Breast epithelium (tissue), 4 donors: ENCODE measurements at regions of chr13 and their contacts with region 1.

Region 1: DNA sequence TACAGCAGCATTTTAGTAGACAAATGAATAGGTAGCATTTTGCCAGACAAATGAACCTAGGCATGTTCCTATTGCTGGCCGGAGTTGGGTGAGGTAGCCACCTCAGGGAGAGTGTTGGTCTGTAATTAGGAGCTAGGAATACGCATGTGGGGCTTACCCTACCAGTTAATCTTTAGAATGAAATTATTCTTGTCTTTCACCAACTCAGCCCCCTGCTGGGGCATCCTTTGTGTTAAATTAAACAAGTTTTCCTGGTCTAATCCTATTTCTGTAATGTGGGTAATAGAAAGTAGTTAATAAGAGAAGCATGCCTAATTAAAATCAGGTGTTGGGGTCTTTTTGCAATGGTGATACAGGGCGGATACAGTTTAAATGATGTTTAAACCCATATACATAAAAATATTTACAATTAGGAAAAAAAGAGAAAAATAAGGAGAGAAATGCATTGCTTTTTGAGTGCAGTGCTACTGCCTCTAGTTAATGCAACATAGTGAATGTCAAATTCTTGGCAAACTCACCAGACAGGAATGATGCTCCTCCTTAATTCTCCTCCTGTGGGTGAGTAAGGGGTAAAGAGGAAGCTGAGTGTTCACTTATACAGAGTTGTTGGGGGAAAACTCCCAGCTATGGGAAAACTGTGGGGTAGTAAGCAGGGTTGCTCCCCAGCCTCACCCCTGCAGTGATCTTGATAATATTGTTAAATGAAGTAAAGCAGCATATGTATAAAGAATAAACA is 276.4 kb upstream of the EDNRB start:
- DNase-seq: no peak
- H3K4me3 ChIP-seq: no peak overlapping the region
- H3K27ac ChIP-seq: no peak overlapping the region
- H3K4me1 ChIP-seq: no peaks in the 10 kb centered on the region
- H3K27me3 ChIP-seq: peaks cover 0 to 3% of the 10 kb centered on the region in 2 donors
- CTCF ChIP-seq: no peak
- POLR2A ChIP-seq: no peak

Region 2: GRCh38 chr13:79090552-79091124 is 895.6 kb after region 1 on chr13:
- intact Hi-C with region 1: loop called (anchors 5 kb)
- DNase-seq: no peak
- H3K4me3 ChIP-seq: no peak overlapping the region
- H3K27ac ChIP-seq: no peak overlapping the region
- H3K4me1 ChIP-seq: no peaks in the 10 kb centered on the region
- H3K27me3 ChIP-seq: no peaks in the 10 kb centered on the region
- CTCF ChIP-seq: no peak
- POLR2A ChIP-seq: no peak

Region 3: GRCh38 chr13:79155883-79156282 is 960.8 kb after region 1 on chr13:
- intact Hi-C with region 1: no loop called
- DNase-seq: no peak
- H3K4me3 ChIP-seq: no peak overlapping the region
- H3K27ac ChIP-seq: no peak overlapping the region
- H3K4me1 ChIP-seq: no peaks in the 10 kb centered on the region
- H3K27me3 ChIP-seq: no peaks in the 10 kb centered on the region
- CTCF ChIP-seq: no peak
- POLR2A ChIP-seq: no peak